AG04449 (cell line): ENCODE measurements at regions of chr10 and their contacts with region 1.

Region 1: GRCh38 chr10:63720072-63720537 is 198.9 kb downstream of the REEP3 start:
- DNase-seq: no peak
- H3K4me3 ChIP-seq: no peak overlapping the region
- CTCF ChIP-seq: peak; percentile 71

Region 2: GRCh38 chr10:63166742-63167258 is 553.3 kb before region 1 on chr10:
- CTCF ChIA-PET with region 1: interaction called, 375 read pairs
- POLR2A ChIA-PET with region 1: no interaction called
- DNase-seq: peak; percentile 28
- H3K4me3 ChIP-seq: no peak overlapping the region
- CTCF ChIP-seq: peak; percentile 62

Region 3: GRCh38 chr10:63206997-63207811 is 512.9 kb before region 1 on chr10:
- CTCF ChIA-PET with region 1: interaction called, 13 read pairs
- POLR2A ChIA-PET with region 1: no interaction called
- DNase-seq: peak; percentile 28
- H3K4me3 ChIP-seq: peak overlapping the region; percentile 18
- CTCF ChIP-seq: no peak

Region 4: DNA sequence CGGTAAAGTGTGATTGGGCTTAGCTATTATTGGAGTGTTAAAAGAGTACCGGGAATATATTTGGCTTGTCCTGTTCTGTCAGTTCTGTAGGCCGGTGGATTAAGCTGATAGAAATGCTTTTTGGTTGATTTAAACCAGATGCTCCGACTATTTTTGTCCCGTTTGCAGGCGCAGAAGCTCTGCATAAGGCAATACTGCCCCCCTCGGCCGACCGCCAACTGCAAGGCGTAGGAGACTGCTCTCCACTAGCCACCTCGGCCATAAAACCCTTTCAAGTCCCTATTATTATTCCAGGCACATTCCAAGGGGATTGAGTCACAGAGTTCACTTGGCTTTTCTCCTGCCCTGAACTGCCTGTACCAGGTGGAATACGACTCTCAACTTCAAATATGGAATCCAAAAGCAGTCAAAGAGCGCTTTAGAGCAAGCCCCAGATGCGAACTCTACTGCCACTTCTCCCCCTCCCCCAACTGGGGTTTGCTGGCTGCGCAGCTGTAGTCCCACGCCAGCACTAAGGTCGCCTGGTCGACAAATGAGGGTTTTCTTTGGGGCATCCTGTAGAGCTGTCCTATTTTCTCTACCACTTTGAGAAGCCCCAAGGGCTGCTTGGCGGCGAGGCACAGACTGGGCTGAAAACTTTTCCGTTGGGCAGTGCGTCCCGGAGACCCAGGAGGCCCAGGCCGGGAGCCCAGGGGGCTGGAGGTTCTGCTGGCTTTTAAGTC is 90.6 kb before region 1 on chr10:
- CTCF ChIA-PET with region 1: interaction called, 166 read pairs
- POLR2A ChIA-PET with region 1: interaction called, 4 read pairs
- DNase-seq: peak; percentile 93
- H3K4me3 ChIP-seq: peak overlapping the region; percentile 73
- CTCF ChIP-seq: peak; percentile 82

Region 5: DNA sequence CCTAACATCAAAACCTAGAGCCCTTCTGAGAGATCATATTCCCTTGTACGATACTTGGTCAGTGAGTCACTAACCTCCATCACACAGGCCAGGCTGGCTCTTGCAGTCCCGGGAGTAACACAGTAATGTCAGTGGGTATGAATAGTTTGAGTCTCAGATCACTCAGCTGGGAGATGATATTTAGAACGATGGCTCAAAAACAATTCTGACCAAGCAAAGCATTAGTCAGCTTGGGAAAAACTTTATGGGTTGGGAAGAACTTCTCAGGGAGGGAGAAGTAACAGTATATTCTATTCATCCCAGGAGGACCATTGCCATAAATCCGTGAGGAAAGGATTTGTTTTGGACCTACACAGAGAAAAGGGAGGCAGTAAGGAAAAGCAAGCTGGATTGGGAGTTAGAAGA is 19.9 kb before region 1 on chr10:
- CTCF ChIA-PET with region 1: interaction called, 27 read pairs
- POLR2A ChIA-PET with region 1: no interaction called
- DNase-seq: peak; percentile 95
- H3K4me3 ChIP-seq: no peak overlapping the region; the same call in 1 of the 2 replicates
- CTCF ChIP-seq: no peak

Region 6: DNA sequence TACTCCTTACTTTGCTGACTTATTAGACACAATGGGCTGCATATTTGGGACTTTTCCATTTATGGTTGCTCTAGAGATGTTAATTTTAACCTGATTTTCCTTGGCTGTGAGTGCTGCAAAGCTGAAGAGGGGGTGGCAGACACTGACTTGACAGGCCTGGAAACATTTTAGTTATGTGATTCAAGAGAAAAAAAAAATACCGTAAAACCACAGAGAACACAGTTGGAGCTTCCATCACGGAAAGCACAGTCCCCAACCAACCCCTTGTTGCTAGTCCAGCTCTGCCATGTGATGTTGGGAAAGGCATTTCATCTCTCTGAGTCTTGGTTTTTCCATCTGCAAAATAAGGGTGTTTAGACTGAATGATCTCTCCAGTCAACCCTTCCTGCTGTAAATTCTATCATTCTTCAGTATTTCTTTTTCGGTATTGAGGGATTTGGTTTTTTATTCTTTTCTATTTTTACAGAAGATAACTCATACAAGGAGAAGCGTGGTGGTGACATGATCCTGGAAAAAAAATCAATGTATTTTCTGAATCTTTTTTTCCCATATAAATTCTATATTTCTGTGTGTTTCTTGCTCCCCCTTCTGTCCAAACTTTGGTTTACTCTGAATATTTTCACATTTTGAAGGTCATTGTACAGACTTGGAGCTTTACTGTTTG is 47.2 kb after region 1 on chr10:
- CTCF ChIA-PET with region 1: interaction called, 10 read pairs
- POLR2A ChIA-PET with region 1: no interaction called
- DNase-seq: peak; percentile 46
- H3K4me3 ChIP-seq: no peak overlapping the region
- CTCF ChIP-seq: peak; percentile 21